ENCODE measurements at regions of chr2 and their contacts with region 1.

Region 1: GRCh38 chr2:241149925-241150659 is at the start of gene PPP1R7:
- DNase-seq: peak; percentile 99
- H3K4me3 ChIP-seq: peak within 1 kb of the TSS; percentile 74 to 100 (median 94)
- H3K27ac ChIP-seq: peak within 1 kb of the TSS; percentile 79 to 87 (median 86)
- H3K4me1 ChIP-seq: peaks cover 11 to 33% (median 24%) of the 10 kb centered on the region in 4 donors
- H3K27me3 ChIP-seq: no peaks in the 10 kb centered on the region
- CTCF ChIP-seq: peak in 1 of 3 experiments; percentile 35
- EP300 ChIP-seq: no peak
- POLR2A ChIP-seq: peak; percentile 45
- total RNA-seq, gene PPP1R7: 69.1 to 87.2 (median 73.7) TPM

Region 2: GRCh38 chr2:241102239-241102803 is 47.8 kb before region 1 on chr2 and contains the start of gene MTERF4:
- intact Hi-C with region 1: loop called (anchors 5 kb)
- DNase-seq: peak; percentile 97
- H3K4me3 ChIP-seq: peak within 1 kb of the TSS; percentile 76 to 90 (median 84)
- H3K27ac ChIP-seq: peak within 1 kb of the TSS; percentile 85 to 88 (median 87)
- H3K4me1 ChIP-seq: peaks cover 18 to 43% (median 25%) of the 10 kb centered on the region in 4 donors
- H3K27me3 ChIP-seq: no peaks in the 10 kb centered on the region
- CTCF ChIP-seq: peak in 1 of 3 experiments; percentile 21
- EP300 ChIP-seq: no peak
- POLR2A ChIP-seq: no peak
- total RNA-seq, gene MTERF4: 19.5 to 26.6 (median 24.5) TPM

Region 3: GRCh38 chr2:241217320-241218031 is 67.4 kb after region 1 on chr2:
- intact Hi-C with region 1: loop called (anchors 5 kb)
- DNase-seq: no peak
- H3K4me3 ChIP-seq: peak overlapping the region; percentile 53 to 70 (median 60)
- H3K27ac ChIP-seq: peak overlapping the region; percentile 83 to 94 (median 90)
- H3K4me1 ChIP-seq: peaks cover 7 to 27% (median 16%) of the 10 kb centered on the region in 4 donors
- H3K27me3 ChIP-seq: no peaks in the 10 kb centered on the region
- CTCF ChIP-seq: peak in 1 of 3 experiments; percentile 3
- EP300 ChIP-seq: no peak
- POLR2A ChIP-seq: no peak

Measured in esophagus muscularis mucosa (tissue), 4 donors.